ENCODE measurements at regions of chr15 and their contacts with region 1.

Region 1: DNA sequence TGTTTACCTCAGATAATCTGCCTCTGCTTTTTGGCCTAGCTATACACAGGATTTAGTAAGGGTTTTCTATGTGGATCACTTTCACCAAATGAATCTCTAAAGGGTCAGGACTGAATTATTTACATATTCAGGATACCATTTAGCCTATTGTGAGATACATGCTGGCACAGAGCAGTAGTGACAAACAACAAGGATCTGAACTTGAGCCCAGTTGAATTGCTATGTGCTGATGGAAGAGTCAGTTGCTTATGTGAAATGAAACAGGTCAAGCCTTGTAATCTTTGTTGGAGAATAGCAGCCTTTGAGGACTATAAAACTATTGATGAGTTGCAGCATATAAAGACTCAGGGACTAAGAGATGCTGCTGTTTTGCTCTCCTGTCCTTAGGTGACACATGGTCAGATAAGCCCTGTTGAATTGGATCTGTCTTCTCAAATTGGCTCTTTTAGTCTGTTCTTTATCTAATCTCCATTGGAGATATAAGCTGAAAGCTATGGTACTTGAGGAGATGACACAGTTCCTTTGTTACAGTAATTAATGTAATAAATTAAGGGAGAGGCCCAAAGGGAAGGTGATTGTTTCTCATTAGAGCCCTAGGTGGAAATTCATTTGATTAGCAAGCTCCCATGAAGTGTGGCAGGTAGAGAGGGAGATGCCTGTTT is 30.4 kb downstream of the ZNF609 start:
- DNase-seq: no peak
- ATAC-seq: no peak
- H3K4me3 ChIP-seq: no peak overlapping the region
- H3K4me3 Mint-ChIP-seq: no peak overlapping the region
- H3K27ac ChIP-seq: no peak overlapping the region
- H3K27ac Mint-ChIP-seq: no peak overlapping the region
- H3K4me1 ChIP-seq: no peaks in the 10 kb centered on the region
- H3K4me1 Mint-ChIP-seq: no peaks in the 10 kb centered on the region
- H3K27me3 ChIP-seq: no peaks in the 10 kb centered on the region
- H3K27me3 Mint-ChIP-seq: no peaks in the 10 kb centered on the region
- CTCF ChIP-seq: no peak

Region 2: GRCh38 chr15:64503197-64503596 is 12.5 kb after region 1 on chr15:
- CTCF ChIA-PET with region 1: no interaction called
- POLR2A ChIA-PET with region 1: no interaction called
- intact Hi-C with region 1: no loop called
- DNase-seq: peak; percentile 11
- ATAC-seq: no peak
- H3K4me3 ChIP-seq: no peak overlapping the region
- H3K4me3 Mint-ChIP-seq: peak overlapping the region; percentile 1
- H3K27ac ChIP-seq: peak overlapping the region in 1 of 2 donors; percentile 37
- H3K27ac Mint-ChIP-seq: peak overlapping the region; percentile 17
- H3K4me1 ChIP-seq: peaks cover 30 to 31% of the 10 kb centered on the region in 2 donors
- H3K4me1 Mint-ChIP-seq: peaks cover 49% of the 10 kb centered on the region
- H3K27me3 ChIP-seq: no peaks in the 10 kb centered on the region
- H3K27me3 Mint-ChIP-seq: no peaks in the 10 kb centered on the region
- CTCF ChIP-seq: no peak

Region 3: DNA sequence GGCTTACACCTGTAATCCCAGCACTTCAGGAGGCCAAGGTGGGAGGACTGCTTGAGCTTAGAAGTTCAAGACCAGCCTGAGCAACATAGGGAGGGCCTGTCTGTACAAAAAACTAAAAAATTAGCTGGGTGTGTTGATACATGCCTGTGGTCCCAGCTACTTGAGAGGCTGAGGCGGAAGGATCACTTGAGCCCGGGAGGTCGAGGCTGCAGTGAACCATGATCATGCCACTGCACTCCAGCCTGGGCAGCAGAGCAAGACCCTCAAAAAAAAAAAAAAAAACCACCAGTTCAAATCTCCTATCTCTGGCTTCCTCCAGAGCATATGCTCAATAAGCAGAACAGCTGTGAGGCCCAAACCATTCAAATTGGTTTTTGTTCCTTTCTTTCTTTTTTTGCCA is 23.1 kb after region 1 on chr15:
- CTCF ChIA-PET with region 1: no interaction called
- POLR2A ChIA-PET with region 1: interaction called, 10 read pairs
- intact Hi-C with region 1: no loop called
- DNase-seq: no peak
- ATAC-seq: no peak
- H3K4me3 ChIP-seq: no peak overlapping the region
- H3K4me3 Mint-ChIP-seq: no peak overlapping the region
- H3K27ac ChIP-seq: no peak overlapping the region
- H3K27ac Mint-ChIP-seq: no peak overlapping the region
- H3K4me1 ChIP-seq: peaks cover 6 to 8% of the 10 kb centered on the region in 2 donors
- H3K4me1 Mint-ChIP-seq: peaks cover 38% of the 10 kb centered on the region
- H3K27me3 ChIP-seq: no peaks in the 10 kb centered on the region
- H3K27me3 Mint-ChIP-seq: no peaks in the 10 kb centered on the region
- CTCF ChIP-seq: no peak